Colonic mucosa (tissue), 4 donors: ENCODE measurements at regions of chr10 and their contacts with region 1.

Region 1: GRCh38 chr10:92573798-92574547 is at the start of gene IDE:
- DNase-seq: peak; percentile 90
- H3K4me3 ChIP-seq: peak within 1 kb of the TSS; percentile 93
- H3K27ac ChIP-seq: peak within 1 kb of the TSS; percentile 90
- H3K4me1 ChIP-seq: no peaks in the 10 kb centered on the region
- H3K27me3 ChIP-seq: no peaks in the 10 kb centered on the region
- CTCF ChIP-seq: peak; percentile 82
- total RNA-seq, gene IDE: 39.0 to 44.8 TPM

Region 2: DNA sequence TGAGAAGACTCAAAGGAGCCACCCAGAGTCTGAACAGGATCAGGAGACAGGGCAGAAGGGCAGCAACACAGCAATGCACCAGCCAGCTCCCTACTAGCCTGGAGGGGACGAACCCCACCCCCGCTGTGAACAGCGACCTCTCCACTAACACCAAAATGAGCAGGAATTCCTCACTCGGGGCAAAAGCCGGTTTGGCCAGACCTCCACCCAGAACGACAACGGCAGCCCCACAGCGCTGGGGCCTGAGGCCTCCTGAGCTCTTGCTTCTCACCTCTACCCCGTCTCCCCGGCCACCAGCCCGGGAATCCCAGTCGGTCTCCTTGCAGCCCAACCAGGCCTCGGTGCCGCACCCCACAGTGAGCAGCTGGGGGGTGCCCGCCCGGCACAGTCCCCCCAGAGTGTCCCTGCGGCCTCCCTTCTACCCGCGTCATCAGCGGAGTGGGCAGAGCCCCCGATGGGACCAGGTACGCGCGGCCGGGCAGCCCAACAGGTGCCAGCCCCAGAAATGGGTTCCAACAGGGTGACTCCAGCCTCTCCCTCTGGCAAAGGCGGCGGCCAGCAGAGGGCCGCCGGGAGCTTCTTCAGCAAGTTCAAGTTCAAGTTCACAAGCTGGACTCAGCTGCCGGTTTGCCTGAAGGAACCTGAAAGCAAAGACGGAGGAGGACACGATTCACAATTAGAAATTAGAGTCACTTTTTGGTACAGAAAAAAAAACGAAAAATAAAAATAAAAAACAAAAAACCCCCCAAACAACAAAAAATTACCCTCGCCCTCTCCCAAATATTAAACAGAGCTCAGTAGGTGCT is 154.0 kb before region 1 on chr10:
- intact Hi-C with region 1: no loop called
- DNase-seq: peak; percentile 49
- H3K4me3 ChIP-seq: peak overlapping the region; percentile 35
- H3K27ac ChIP-seq: no peak overlapping the region
- H3K4me1 ChIP-seq: no peaks in the 10 kb centered on the region
- H3K27me3 ChIP-seq: peaks cover 7% of the 10 kb centered on the region
- CTCF ChIP-seq: peak; percentile 19

Region 3: GRCh38 chr10:92517034-92517655 is 56.8 kb before region 1 on chr10:
- intact Hi-C with region 1: loop called (anchors 1 kb)
- DNase-seq: peak; percentile 67
- H3K4me3 ChIP-seq: no peak overlapping the region
- H3K27ac ChIP-seq: no peak overlapping the region
- H3K4me1 ChIP-seq: no peaks in the 10 kb centered on the region
- H3K27me3 ChIP-seq: no peaks in the 10 kb centered on the region
- CTCF ChIP-seq: peak; percentile 71

Region 4: DNA sequence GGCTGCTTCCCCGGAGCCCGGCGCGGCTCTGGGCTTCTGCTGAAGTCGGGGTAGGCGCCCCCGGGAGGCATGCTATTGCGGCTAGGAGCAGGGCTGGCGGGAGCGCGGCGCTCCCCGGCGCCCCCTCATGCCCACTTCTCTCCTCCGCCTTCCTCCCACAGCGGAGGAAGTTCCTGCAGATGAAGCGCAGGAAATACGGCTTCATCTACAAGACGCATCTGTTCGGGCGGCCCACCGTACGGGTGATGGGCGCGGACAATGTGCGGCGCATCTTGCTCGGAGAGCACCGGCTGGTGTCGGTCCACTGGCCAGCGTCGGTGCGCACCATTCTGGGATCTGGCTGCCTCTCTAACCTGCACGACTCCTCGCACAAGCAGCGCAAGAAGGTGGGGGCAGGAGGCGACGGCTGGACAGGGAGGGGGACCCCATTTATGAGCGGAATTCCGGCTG is 500.2 kb after region 1 on chr10:
- intact Hi-C with region 1: no loop called
- DNase-seq: no peak
- H3K4me3 ChIP-seq: peak overlapping the region; percentile 16
- H3K27ac ChIP-seq: no peak overlapping the region
- H3K4me1 ChIP-seq: peaks cover 10% of the 10 kb centered on the region
- H3K27me3 ChIP-seq: peaks cover 67% of the 10 kb centered on the region
- CTCF ChIP-seq: no peak